Activated CD4-positive, alpha-beta memory T cell treated with anti-CD3 and anti-CD28 coated beads, Interleukin-2, amount 10 ng/mL, durations not matched to agents 7 days and 5 days (primary cell): ENCODE measurements at regions of chr17 and their contacts with region 1.

Region 1: GRCh38 chr17:50269477-50270434 is 4.5 kb upstream of the TMEM92 start:
- DNase-seq: peak; percentile 76
- H3K4me3 Mint-ChIP-seq: no peak overlapping the region
- H3K27ac Mint-ChIP-seq: no peak overlapping the region
- H3K4me1 Mint-ChIP-seq: peaks cover 18% of the 10 kb centered on the region
- H3K27me3 Mint-ChIP-seq: peaks cover 9% of the 10 kb centered on the region

Region 2: GRCh38 chr17:50177983-50178834 is 91.5 kb before region 1 on chr17:
- CTCF ChIA-PET with region 1: no interaction called
- POLR2A ChIA-PET with region 1: no interaction called
- DNase-seq: peak; percentile 52
- H3K4me3 Mint-ChIP-seq: no peak overlapping the region
- H3K27ac Mint-ChIP-seq: no peak overlapping the region
- H3K4me1 Mint-ChIP-seq: peaks cover 18% of the 10 kb centered on the region
- H3K27me3 Mint-ChIP-seq: peaks cover 16% of the 10 kb centered on the region

Region 3: DNA sequence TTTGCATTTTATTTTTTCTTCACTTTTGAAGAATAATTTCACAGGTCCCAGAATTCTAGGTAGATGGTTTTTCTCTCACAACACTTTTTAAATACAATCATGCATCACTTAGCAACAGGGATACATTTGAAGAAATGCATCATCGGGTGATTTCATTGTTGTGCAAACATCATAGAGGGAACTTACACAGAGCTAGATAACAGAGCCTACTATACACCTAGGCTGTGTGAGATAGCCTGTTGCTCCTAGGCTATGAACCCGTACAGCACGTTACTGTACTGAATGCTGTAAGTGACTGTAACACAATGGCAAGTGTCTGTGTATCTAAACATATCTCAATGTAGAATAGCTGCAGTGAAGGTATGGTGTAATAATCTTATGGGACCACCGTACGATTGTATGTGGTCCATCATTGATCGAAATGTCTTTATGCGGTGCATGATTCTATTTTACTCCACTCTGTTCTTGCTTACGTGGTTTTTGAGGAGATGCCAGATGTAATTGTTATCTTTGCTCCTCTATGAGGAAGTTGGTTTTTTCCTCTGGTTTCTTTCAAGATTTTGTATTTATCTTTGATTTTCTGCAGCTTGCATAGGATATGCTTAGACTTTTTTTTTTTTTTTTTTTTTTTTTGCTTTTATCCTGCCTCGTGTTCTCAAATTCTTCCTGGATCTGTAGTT is 31.0 kb before region 1 on chr17:
- CTCF ChIA-PET with region 1: no interaction called
- POLR2A ChIA-PET with region 1: no interaction called
- DNase-seq: no peak
- H3K4me3 Mint-ChIP-seq: no peak overlapping the region
- H3K27ac Mint-ChIP-seq: no peak overlapping the region
- H3K4me1 Mint-ChIP-seq: no peaks in the 10 kb centered on the region
- H3K27me3 Mint-ChIP-seq: peaks cover 46% of the 10 kb centered on the region

Region 4: GRCh38 chr17:50283246-50283645 is 13.5 kb after region 1 on chr17:
- CTCF ChIA-PET with region 1: interaction called, 12 read pairs
- POLR2A ChIA-PET with region 1: interaction called, 6 read pairs
- DNase-seq: peak; percentile 70
- H3K4me3 Mint-ChIP-seq: no peak overlapping the region
- H3K27ac Mint-ChIP-seq: peak overlapping the region; percentile 2
- H3K4me1 Mint-ChIP-seq: peaks cover 38% of the 10 kb centered on the region
- H3K27me3 Mint-ChIP-seq: peaks cover 24% of the 10 kb centered on the region

Region 5: DNA sequence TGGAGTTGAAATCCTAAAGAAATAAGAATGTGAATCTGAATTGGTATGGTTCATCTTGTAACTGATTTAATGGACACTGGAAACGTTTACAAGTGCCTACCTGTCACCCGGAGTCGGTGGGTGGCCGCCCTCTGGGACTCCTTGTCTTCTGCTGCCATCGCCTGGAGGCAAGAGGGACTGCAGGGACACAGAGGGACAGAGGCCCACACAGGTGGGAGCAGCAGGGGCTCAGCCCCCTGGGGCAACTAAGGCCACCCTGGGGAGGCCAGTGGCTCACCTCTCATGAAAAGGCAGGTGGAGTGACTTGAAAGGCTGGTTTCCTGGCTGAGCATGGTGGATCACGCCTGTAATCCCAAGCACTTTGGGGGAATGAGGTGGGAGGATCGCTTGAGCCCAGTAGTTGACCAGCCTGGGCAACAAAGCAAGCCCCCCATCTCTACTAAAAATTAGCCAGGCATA is 27.7 kb after region 1 on chr17:
- CTCF ChIA-PET with region 1: interaction called, 38 read pairs
- POLR2A ChIA-PET with region 1: interaction called, 3 read pairs
- DNase-seq: peak; percentile 82
- H3K4me3 Mint-ChIP-seq: no peak overlapping the region
- H3K27ac Mint-ChIP-seq: no peak overlapping the region
- H3K4me1 Mint-ChIP-seq: peaks cover 13% of the 10 kb centered on the region
- H3K27me3 Mint-ChIP-seq: peaks cover 2% of the 10 kb centered on the region